Breast epithelium (tissue), 4 donors: ENCODE measurements at regions of chr16 and their contacts with region 1.

Region 1: GRCh38 chr16:61934601-61935000 is 101.6 kb downstream of the CDH8 start:
- DNase-seq: no peak
- H3K4me3 ChIP-seq: no peak overlapping the region
- H3K27ac ChIP-seq: no peak overlapping the region
- H3K4me1 ChIP-seq: no peaks in the 10 kb centered on the region
- H3K27me3 ChIP-seq: no peaks in the 10 kb centered on the region
- CTCF ChIP-seq: no peak
- POLR2A ChIP-seq: no peak

Region 2: GRCh38 chr16:60142619-60143347 is 1791.8 kb before region 1 on chr16:
- intact Hi-C with region 1: no loop called
- DNase-seq: no peak
- H3K4me3 ChIP-seq: no peak overlapping the region
- H3K27ac ChIP-seq: no peak overlapping the region
- H3K4me1 ChIP-seq: no peaks in the 10 kb centered on the region
- H3K27me3 ChIP-seq: no peaks in the 10 kb centered on the region
- CTCF ChIP-seq: no peak
- POLR2A ChIP-seq: no peak

Region 3: DNA sequence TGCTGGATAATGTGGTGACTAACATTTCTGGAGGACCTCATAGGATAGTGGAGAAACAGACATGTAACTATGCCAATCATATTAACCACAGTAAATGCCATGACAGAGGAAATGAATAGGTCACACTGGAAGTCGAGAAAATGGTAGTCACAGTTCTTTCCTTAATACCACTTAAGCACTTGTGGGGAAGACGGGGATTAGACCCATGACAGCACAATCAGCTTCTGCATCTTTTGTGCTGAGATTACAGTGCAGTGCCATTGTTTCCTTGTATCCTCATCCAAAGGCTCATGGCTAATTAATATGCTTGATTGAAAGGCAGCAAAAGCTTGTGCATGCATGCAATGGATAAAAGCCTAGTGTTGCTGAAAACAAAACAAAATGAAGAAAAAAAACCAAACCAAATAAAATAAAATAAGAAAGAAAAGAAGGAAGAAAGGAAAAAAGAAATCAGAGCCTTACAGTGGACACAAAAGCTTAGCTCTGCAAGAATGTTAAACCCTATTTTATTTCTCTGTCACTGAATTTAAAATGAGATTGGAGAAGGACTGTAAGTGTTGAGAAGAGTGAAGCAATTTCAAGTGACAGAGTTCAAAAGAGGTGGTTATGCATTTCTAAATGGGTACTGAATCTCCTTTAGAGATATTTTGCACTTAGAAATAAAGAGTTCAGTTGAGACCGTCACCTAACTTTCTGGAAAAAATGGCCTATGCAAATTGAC is 910.3 kb before region 1 on chr16:
- intact Hi-C with region 1: loop called (anchors 5 kb)
- DNase-seq: no peak
- H3K4me3 ChIP-seq: no peak overlapping the region
- H3K27ac ChIP-seq: no peak overlapping the region
- H3K4me1 ChIP-seq: no peaks in the 10 kb centered on the region
- H3K27me3 ChIP-seq: no peaks in the 10 kb centered on the region
- CTCF ChIP-seq: no peak
- POLR2A ChIP-seq: no peak

Region 4: GRCh38 chr16:61432421-61432820 is 502.2 kb before region 1 on chr16:
- intact Hi-C with region 1: no loop called
- DNase-seq: no peak
- H3K4me3 ChIP-seq: no peak overlapping the region
- H3K27ac ChIP-seq: no peak overlapping the region
- H3K4me1 ChIP-seq: no peaks in the 10 kb centered on the region
- H3K27me3 ChIP-seq: no peaks in the 10 kb centered on the region
- CTCF ChIP-seq: no peak
- POLR2A ChIP-seq: no peak

Region 5: GRCh38 chr16:62216837-62217236 is 282.2 kb after region 1 on chr16:
- intact Hi-C with region 1: no loop called
- DNase-seq: no peak
- H3K4me3 ChIP-seq: no peak overlapping the region
- H3K27ac ChIP-seq: no peak overlapping the region
- H3K4me1 ChIP-seq: no peaks in the 10 kb centered on the region
- H3K27me3 ChIP-seq: no peaks in the 10 kb centered on the region
- CTCF ChIP-seq: no peak
- POLR2A ChIP-seq: no peak